Dorsolateral prefrontal cortex (tissue), 120 donors: ENCODE measurements at regions of chr4 and their contacts with region 1.

Region 1: GRCh38 chr4:185039508-185040273 is 21.4 kb downstream of the HELT start:
- DNase-seq: peak in 4 of 10 donors; percentile 24 to 52 (median 48)
- H3K4me3 ChIP-seq: peak overlapping the region in 20 of 59 donors; percentile 4 to 42 (median 20)
- H3K27ac ChIP-seq: no peak overlapping the region
- H3K27me3 ChIP-seq: peaks cover 0 to 22% (median 0%) of the 10 kb centered on the region in 45 donors
- CTCF ChIP-seq: peak; percentile 46 to 97 (median 83)

Region 2: GRCh38 chr4:184913356-184914143 is 126.1 kb before region 1 on chr4:
- intact Hi-C with region 1: no loop called
- DNase-seq: no peak
- H3K4me3 ChIP-seq: no peak overlapping the region
- H3K27ac ChIP-seq: no peak overlapping the region
- H3K27me3 ChIP-seq: peaks cover 0 to 4% (median 0%) of the 10 kb centered on the region in 45 donors
- CTCF ChIP-seq: no peak

Region 3: DNA sequence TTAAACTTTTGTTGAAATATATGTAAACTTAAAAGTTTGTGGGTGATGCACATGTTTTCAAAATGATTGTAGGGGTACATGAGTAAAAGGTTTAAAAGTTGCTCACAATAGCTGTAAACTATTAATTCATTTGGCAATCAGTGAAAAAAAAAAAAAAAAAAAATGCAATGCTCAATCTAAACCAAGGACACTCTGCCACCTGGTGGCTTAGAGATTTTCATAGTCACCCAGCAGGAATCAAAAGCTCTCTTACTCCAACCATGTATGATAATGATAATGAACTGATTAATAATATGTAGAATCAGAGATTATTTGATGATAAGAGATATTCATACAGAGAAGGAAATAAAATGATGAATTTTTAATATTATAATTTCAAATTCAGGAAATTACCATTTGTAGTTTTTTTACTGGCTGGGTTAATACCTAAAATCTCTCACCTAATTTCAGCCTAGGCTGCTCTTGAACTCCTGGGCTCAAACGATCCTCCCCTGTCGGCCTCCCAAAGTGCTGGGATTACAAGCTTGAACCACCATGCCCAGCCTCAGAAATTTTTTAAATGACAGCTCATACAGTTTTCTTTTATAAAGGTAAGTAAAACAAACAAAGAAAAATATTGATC is 56.5 kb after region 1 on chr4:
- intact Hi-C with region 1: loop called (anchors 2 to 10 kb)
- DNase-seq: peak in 2 of 10 donors; percentile 7 to 34
- H3K4me3 ChIP-seq: no peak overlapping the region
- H3K27ac ChIP-seq: no peak overlapping the region
- H3K27me3 ChIP-seq: peaks cover 0 to 28% (median 0%) of the 10 kb centered on the region in 45 donors
- CTCF ChIP-seq: peak; percentile 58 to 87 (median 75)